ENCODE measurements at regions of chr7 and their contacts with region 1.

Region 1: GRCh38 chr7:28442540-28443420 is 30.5 kb downstream of the CREB5 start:
- DNase-seq: peak; percentile 6
- H3K4me3 Mint-ChIP-seq: no peak overlapping the region
- H3K27ac Mint-ChIP-seq: no peak overlapping the region
- H3K4me1 Mint-ChIP-seq: peaks cover 12% of the 10 kb centered on the region
- H3K27me3 Mint-ChIP-seq: peaks cover 41% of the 10 kb centered on the region

Region 2: GRCh38 chr7:28093623-28094232 is 349.1 kb before region 1 on chr7:
- CTCF ChIA-PET with region 1: no interaction called
- intact Hi-C with region 1: no loop called
- DNase-seq: peak; percentile 86
- H3K4me3 Mint-ChIP-seq: no peak overlapping the region
- H3K27ac Mint-ChIP-seq: no peak overlapping the region
- H3K4me1 Mint-ChIP-seq: peaks cover 3% of the 10 kb centered on the region
- H3K27me3 Mint-ChIP-seq: no peaks in the 10 kb centered on the region

Region 3: DNA sequence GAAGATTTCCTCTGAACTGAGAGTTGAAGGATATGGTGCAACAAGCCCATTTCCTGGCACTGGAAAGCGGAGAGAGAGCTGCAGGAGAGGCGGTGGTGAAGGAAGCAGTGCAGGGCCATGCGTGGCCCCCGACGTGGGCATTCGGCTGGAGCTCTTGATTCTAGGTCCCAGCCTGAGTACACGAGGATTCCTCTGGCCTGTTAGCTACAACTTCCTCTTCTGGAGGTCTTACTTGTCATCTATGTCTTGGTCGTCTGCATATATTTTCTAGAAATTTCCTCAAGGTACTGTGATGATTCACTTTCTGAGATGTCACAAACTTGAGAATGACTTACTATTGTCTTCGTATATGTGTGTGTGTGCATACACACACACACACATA is 203.0 kb before region 1 on chr7:
- CTCF ChIA-PET with region 1: no interaction called
- intact Hi-C with region 1: loop called (anchors 5 kb)
- DNase-seq: peak; percentile 6
- H3K4me3 Mint-ChIP-seq: no peak overlapping the region
- H3K27ac Mint-ChIP-seq: no peak overlapping the region
- H3K4me1 Mint-ChIP-seq: peaks cover 9% of the 10 kb centered on the region
- H3K27me3 Mint-ChIP-seq: peaks cover 48% of the 10 kb centered on the region

Region 4: DNA sequence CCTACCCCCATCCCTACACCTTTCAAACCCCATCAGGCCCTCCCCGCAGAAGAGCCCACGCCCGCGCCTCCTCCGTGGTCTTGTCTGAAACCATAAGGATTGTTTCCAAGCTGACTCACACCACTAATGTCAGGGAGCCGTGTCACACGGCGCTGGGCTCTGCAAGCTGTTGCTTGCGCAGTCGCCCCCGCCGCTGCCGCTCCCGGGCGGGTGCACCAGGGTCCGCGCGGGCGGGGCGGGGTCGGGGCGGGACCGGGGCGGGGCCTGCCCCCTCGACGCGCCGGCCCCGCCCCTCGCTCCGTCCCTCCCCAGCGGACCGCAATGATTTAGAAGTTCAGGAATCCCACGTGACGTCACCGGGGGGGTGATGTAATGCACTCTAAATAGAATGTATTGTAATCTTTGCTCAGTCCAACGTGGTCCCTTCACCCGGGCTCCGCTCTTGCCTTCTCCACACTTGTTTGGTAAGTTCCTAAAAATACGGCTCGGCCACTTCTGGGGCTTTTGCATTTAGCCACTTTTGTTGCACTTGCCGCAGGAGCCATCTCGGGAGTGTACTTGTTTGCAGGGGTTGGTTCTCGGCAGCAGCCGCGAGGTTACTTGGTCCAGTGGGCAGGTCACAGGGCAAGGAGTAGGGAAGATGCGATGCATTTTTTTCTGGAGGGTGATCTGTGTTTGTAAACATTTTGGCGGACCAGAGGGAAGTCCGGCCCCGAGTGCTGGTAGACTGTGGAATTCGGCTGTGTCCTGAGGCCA is 33.6 kb before region 1 on chr7:
- CTCF ChIA-PET with region 1: no interaction called
- intact Hi-C with region 1: loop called (anchors 2 kb)
- DNase-seq: peak; percentile 88
- H3K4me3 Mint-ChIP-seq: peak overlapping the region; percentile 80
- H3K27ac Mint-ChIP-seq: no peak overlapping the region
- H3K4me1 Mint-ChIP-seq: peaks cover 39% of the 10 kb centered on the region
- H3K27me3 Mint-ChIP-seq: peaks cover 67% of the 10 kb centered on the region

Measured in activated naive CD4-positive, alpha-beta T cell treated with anti-CD3 and anti-CD28 coated beads for 36 hours (primary cell).